Psoas muscle (tissue), 8 donors: ENCODE measurements at regions of chrX and their contacts with region 1.

Region 1: GRCh38 chrX:44974422-44974821 is 101.4 kb downstream of the KDM6A start:
- DNase-seq: no peak
- ATAC-seq: peak in 1 of 4 donors; percentile 14
- H3K4me3 ChIP-seq: no peak overlapping the region
- H3K27ac ChIP-seq: no peak overlapping the region
- H3K4me1 ChIP-seq: peaks cover 7% of the 10 kb centered on the region
- H3K27me3 ChIP-seq: no peaks in the 10 kb centered on the region
- CTCF ChIP-seq: no peak

Region 2: GRCh38 chrX:44747317-44747716 is 227.1 kb before region 1 on chrX:
- intact Hi-C with region 1: no loop called
- DNase-seq: no peak
- ATAC-seq: no peak
- H3K4me3 ChIP-seq: no peak overlapping the region
- H3K27ac ChIP-seq: no peak overlapping the region
- H3K4me1 ChIP-seq: no peaks in the 10 kb centered on the region
- H3K27me3 ChIP-seq: no peaks in the 10 kb centered on the region
- CTCF ChIP-seq: no peak

Region 3: GRCh38 chrX:44953734-44954502 is 20.5 kb before region 1 on chrX:
- intact Hi-C with region 1: loop called in 1 of 2 experiments (anchors 2 kb)
- DNase-seq: no peak
- ATAC-seq: peak in 2 of 4 donors; percentile 31 to 43
- H3K4me3 ChIP-seq: no peak overlapping the region
- H3K27ac ChIP-seq: no peak overlapping the region
- H3K4me1 ChIP-seq: peaks cover 62% of the 10 kb centered on the region
- H3K27me3 ChIP-seq: no peaks in the 10 kb centered on the region
- CTCF ChIP-seq: no peak

Region 4: DNA sequence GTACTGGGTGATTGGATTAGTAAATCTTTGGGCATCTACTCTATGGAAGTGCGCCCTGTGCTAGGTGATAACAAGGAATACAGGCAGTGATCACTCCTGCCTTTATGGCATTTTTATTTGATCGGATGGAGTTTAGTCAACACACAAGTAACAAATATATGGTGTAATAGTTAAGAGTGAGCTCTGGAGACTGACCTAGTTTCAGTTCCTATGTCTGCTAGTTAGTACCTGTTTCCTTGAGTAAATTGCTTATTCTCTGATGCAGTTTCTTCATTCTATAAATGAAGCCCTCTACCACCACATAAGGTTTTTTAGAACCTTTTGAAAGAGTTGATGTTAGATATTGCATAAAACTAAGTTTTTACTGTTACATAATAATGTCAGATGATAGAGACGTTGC is 33.2 kb after region 1 on chrX:
- intact Hi-C with region 1: loop called in 1 of 2 experiments (anchors 5 kb)
- DNase-seq: no peak
- ATAC-seq: peak in 1 of 4 donors; percentile 29
- H3K4me3 ChIP-seq: no peak overlapping the region
- H3K27ac ChIP-seq: no peak overlapping the region
- H3K4me1 ChIP-seq: peaks cover 23% of the 10 kb centered on the region
- H3K27me3 ChIP-seq: no peaks in the 10 kb centered on the region
- CTCF ChIP-seq: no peak